ENCODE measurements at regions of chr12 and their contacts with region 1.

Region 1: DNA sequence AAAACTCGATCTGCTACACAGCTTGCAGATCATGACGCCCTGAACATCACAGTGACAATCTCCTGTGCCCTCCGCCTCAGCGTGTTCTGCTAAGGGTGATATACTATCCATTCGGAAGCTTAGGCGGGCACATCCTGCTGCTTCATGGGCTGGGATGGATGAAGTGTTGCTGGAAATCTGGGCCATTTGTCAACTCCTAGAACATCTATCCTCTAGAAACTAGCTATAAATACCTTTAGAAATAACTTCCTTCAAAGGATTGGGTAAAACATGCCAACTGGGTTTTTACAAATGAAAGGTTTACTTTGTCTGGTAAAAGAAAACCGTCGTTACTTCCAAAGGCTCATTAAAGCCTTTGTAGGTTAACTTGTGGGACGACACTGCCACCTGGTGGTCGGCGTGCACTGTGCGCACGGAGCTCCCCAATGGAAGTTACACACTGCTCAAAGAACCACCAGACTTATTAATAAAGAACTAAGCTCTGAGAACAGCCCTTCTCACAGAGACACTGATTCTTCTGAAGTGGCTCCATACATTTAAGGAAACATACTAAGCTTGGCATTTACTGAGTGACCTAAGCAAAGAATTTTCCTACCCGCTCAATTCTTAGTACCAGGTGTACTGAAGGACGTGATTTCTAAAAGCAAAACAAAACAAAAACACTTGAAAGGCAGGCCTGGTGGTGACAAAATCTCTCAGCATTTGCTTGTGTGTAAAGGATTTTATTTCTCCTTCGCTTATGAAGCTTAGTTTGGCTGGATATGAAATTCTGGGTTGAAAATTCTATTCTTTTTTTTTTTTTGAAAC is 21.6 kb upstream of the CACNA2D4 start:
- DNase-seq: peak; percentile 95
- H3K4me3 Mint-ChIP-seq: no peak overlapping the region
- H3K27ac Mint-ChIP-seq: no peak overlapping the region
- H3K4me1 Mint-ChIP-seq: no peaks in the 10 kb centered on the region
- H3K27me3 Mint-ChIP-seq: no peaks in the 10 kb centered on the region

Region 2: DNA sequence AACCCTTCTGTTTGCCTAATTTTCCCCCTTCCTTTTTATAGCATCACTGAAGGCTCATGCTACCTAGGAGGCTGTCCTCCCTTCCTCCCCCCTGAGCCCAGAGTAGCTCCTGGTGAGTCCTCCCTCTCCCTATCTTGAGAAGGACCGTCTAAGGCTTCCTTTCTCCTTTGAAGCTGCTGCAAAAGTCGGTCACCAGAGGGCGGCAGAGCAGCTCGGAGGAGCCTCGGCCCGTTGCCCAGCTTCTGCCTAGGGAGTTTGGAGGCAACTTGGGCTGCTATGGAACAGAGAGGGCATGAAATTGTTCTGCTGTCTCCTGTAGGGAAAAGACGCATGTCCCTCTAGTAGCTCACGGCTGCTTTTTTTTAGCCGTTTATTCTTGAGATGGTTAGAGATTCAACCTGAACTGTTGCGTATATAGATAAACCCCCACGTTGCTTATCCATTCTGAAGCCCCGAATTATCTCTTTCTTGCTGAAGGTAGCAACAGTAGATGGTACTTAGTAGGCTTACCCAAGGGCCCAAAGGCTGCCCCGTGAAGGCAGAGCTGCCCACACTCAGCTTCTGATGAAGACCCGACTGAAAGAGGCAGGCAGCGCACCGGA is 305.3 kb before region 1 on chr12:
- CTCF ChIA-PET with region 1: interaction called, 19 read pairs
- intact Hi-C with region 1: loop called (anchors 1 kb)
- DNase-seq: peak; percentile 76
- H3K4me3 Mint-ChIP-seq: no peak overlapping the region
- H3K27ac Mint-ChIP-seq: no peak overlapping the region
- H3K4me1 Mint-ChIP-seq: peaks cover 9% of the 10 kb centered on the region
- H3K27me3 Mint-ChIP-seq: peaks cover 32% of the 10 kb centered on the region

Region 3: DNA sequence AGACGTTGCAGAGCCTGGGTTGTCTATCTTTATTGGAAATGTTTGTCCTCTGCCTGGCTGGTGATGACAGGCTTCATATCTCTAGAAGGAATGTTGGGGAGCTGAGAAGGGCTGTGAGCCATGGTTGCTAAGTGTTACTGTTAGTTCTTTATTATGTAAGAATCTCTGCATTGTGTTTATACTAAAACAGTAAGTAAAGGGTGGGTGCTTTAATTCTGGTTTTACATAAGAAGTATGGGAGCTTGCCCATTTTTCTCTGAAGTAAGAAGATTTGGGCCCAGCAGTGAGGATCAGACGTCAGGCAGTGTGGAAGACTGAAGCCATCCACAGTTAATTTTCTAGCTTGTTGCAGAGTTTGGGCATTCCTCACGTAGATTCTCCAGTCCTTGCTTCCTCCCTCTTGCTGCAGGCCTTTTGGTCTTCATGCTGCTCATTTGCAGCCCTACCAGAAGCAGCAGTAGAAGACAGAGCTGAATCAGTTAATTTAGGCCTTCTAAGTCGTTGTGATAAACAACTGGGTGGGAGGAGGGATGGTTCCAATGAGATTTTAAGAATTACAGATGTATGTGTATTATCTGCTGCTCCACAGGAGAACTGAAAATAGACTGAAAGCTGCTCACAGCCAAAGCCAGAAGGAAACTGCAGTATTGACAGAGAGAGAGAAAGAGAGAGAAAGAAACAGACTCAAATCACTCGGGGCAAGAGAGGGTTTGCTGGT is 289.6 kb before region 1 on chr12:
- CTCF ChIA-PET with region 1: interaction called, 44 read pairs
- intact Hi-C with region 1: loop called (anchors 1 kb)
- DNase-seq: no peak
- H3K4me3 Mint-ChIP-seq: no peak overlapping the region
- H3K27ac Mint-ChIP-seq: no peak overlapping the region
- H3K4me1 Mint-ChIP-seq: peaks cover 1% of the 10 kb centered on the region
- H3K27me3 Mint-ChIP-seq: peaks cover 2% of the 10 kb centered on the region

Region 4: DNA sequence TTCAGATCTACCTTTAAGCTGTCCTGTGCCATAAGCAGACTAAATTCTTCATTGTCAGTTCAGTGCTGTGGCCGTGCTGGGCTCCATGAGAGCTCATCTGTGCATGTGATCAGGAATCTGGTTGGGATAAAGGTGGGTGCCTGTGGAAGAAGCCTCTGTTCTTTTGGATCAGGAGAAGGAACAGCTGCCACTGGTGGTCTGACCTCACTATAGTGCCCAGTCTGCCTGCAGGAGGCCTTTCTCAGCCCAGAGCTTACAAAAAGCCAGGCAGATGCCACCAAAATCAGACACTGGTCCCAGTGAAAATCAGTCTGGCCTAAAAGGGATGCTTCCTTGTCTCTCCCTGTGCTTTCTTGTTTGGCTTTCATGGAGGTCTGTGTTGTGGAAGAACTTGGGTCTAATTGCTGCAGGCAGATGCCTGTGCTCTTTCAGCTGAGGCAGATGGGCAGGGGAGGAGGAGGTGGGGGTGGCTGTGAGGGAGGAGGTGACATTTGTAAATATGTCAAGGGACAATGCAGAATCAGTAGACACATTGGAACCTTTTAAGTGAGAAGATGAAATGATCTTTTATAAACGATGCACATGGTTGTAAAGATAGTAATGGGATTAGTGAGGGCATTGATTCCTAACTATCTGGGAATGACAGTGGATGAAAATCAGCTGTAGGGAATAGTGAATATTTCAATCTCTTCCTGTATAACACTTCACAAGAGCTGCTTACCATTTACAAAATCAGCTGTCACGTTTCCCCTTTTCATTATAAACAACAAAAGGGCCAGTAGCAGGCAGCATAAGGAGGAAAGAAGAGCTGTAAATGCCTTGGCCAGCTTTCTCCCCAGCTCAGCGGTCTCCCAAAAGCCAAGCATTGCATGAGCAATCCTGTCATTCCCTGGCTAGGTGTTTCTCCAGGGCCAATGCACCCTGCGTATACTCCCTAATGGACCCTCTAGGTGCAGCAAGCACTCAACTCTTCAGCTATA is 66.2 kb before region 1 on chr12:
- CTCF ChIA-PET with region 1: interaction called, 10 read pairs
- intact Hi-C with region 1: no loop called
- DNase-seq: no peak
- H3K4me3 Mint-ChIP-seq: no peak overlapping the region
- H3K27ac Mint-ChIP-seq: no peak overlapping the region
- H3K4me1 Mint-ChIP-seq: no peaks in the 10 kb centered on the region
- H3K27me3 Mint-ChIP-seq: peaks cover 6% of the 10 kb centered on the region

Region 5: GRCh38 chr12:1927751-1928351 is 12.2 kb before region 1 on chr12:
- CTCF ChIA-PET with region 1: interaction called, 11 read pairs
- intact Hi-C with region 1: no loop called
- DNase-seq: no peak
- H3K4me3 Mint-ChIP-seq: no peak overlapping the region
- H3K27ac Mint-ChIP-seq: no peak overlapping the region
- H3K4me1 Mint-ChIP-seq: peaks cover 12% of the 10 kb centered on the region
- H3K27me3 Mint-ChIP-seq: no peaks in the 10 kb centered on the region

Region 6: DNA sequence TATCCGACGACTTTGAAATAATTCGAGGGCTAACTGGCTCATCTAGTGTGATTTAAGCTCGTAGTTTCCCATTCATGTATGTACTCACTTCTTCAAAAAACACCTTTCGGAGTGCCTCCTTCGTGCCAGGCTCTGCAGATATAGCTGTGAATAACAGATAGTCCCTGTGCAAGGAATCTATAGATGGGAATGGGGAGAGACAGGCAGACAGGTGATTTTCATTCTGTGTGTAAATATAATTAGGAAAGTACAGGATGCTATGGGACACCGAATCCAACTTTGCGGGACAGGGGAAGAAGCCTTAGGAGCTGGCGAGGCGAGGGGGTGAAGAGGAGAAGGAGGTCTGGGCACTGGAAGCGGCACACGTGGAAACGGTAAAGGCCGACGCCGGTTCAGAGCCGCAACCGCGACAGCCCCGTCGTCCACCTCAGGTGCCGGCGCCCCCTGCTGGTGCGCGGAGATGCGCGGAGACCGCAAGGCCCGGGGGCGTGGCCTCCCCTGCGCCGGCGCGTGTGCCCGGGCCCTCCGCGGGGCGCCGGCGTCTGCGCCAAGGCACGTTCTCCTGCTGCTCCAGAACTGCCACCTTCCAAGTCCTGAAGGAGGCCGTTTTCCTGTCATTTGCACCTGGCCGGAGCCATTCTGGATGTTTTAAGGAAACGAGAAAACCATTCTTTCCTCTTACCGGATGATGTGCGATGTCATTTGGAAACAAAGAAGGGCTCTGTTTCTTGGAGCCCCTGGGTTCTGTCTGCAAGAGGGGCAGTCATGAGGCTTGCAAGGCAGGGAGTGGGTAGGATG is 94.8 kb after region 1 on chr12:
- CTCF ChIA-PET with region 1: interaction called, 4 read pairs
- intact Hi-C with region 1: loop called (anchors 2 kb)
- DNase-seq: peak; percentile 88
- H3K4me3 Mint-ChIP-seq: peak overlapping the region; percentile 59
- H3K27ac Mint-ChIP-seq: no peak overlapping the region
- H3K4me1 Mint-ChIP-seq: peaks cover 10% of the 10 kb centered on the region
- H3K27me3 Mint-ChIP-seq: peaks cover 13% of the 10 kb centered on the region